B cell (primary cell): ENCODE measurements at regions of chr15 and their contacts with region 1.

Region 1: GRCh38 chr15:50496692-50497091 is 49.8 kb downstream of the USP50 start:
- DNase-seq: no peak
- ATAC-seq: no peak
- H3K4me3 ChIP-seq: no peak overlapping the region
- H3K4me3 Mint-ChIP-seq: no peak overlapping the region
- H3K27ac ChIP-seq: no peak overlapping the region
- H3K27ac Mint-ChIP-seq: no peak overlapping the region
- H3K4me1 ChIP-seq: peaks cover 4 to 7% of the 10 kb centered on the region in 2 donors
- H3K4me1 Mint-ChIP-seq: peaks cover 8% of the 10 kb centered on the region
- H3K27me3 ChIP-seq: no peaks in the 10 kb centered on the region
- H3K27me3 Mint-ChIP-seq: no peaks in the 10 kb centered on the region
- CTCF ChIP-seq: no peak

Region 2: DNA sequence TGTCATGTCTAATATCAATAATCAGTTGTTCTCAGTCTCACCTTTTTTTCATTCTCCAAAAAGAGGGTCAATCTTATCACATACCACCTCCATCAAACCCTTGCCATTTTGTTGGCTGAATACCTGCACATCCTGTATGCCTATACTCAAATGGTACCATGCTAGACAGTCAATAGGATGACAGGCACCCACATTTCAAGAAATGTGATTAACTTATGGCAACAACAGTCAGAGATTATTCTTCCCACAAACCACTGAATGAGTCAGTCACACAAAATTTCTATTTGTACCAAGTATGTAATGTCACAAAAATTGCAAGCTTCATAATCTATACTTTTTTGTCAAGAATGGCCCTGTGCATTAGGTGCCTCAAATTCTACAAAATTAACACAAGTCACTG is 319.8 kb before region 1 on chr15:
- CTCF ChIA-PET with region 1: no interaction called
- POLR2A ChIA-PET with region 1: no interaction called
- intact Hi-C with region 1: no loop called
- DNase-seq: no peak
- ATAC-seq: no peak
- H3K4me3 ChIP-seq: no peak overlapping the region
- H3K4me3 Mint-ChIP-seq: no peak overlapping the region
- H3K27ac ChIP-seq: no peak overlapping the region
- H3K27ac Mint-ChIP-seq: no peak overlapping the region
- H3K4me1 ChIP-seq: peaks cover 0 to 2% of the 10 kb centered on the region in 2 donors
- H3K4me1 Mint-ChIP-seq: no peaks in the 10 kb centered on the region
- H3K27me3 ChIP-seq: peaks cover 0 to 9% (median 3%) of the 10 kb centered on the region in 4 experiments
- H3K27me3 Mint-ChIP-seq: peaks cover 29% of the 10 kb centered on the region
- CTCF ChIP-seq: no peak

Region 3: GRCh38 chr15:50590288-50590687 is 93.6 kb after region 1 on chr15:
- CTCF ChIA-PET with region 1: no interaction called
- POLR2A ChIA-PET with region 1: no interaction called
- intact Hi-C with region 1: loop called (anchors 10 kb)
- DNase-seq: no peak
- ATAC-seq: no peak
- H3K4me3 ChIP-seq: no peak overlapping the region
- H3K4me3 Mint-ChIP-seq: no peak overlapping the region
- H3K27ac ChIP-seq: no peak overlapping the region
- H3K27ac Mint-ChIP-seq: no peak overlapping the region
- H3K4me1 ChIP-seq: no peaks in the 10 kb centered on the region
- H3K4me1 Mint-ChIP-seq: no peaks in the 10 kb centered on the region
- H3K27me3 ChIP-seq: no peaks in the 10 kb centered on the region
- H3K27me3 Mint-ChIP-seq: no peaks in the 10 kb centered on the region
- CTCF ChIP-seq: no peak

Region 4: DNA sequence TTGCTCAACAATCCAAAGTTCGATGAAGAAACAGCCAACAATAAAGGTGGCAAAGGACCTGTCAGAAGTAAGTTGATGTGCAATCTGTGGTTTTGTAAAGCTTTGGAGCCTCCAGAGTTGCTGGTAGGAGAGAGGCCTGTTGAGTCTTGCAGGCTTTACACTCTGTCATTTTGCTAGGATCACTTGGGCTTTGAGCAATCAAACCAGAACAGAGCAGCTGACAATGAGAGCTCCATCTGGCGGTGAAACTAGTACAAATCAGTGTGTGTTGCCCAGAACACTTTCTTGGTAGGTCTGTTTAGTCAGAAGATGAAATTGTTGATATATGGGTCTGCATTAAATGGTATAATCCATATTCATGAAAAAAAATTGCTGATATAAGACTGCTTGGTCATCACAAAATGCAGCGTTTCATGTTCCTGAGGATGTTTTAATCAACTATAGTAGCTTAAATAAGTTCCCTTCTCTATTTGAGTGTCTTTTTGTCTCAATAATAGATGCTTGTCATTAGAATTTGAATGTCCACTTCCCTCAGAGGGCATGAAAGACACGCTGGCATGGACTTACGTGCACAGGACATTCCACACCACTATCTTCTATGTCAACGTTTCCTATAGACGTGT is 1280.4 kb after region 1 on chr15:
- CTCF ChIA-PET with region 1: no interaction called
- POLR2A ChIA-PET with region 1: no interaction called
- intact Hi-C with region 1: no loop called
- DNase-seq: peak; percentile 79
- ATAC-seq: peak; percentile 75
- H3K4me3 ChIP-seq: no peak overlapping the region
- H3K4me3 Mint-ChIP-seq: no peak overlapping the region
- H3K27ac ChIP-seq: no peak overlapping the region
- H3K27ac Mint-ChIP-seq: no peak overlapping the region
- H3K4me1 ChIP-seq: peaks cover 0 to 4% of the 10 kb centered on the region in 2 donors
- H3K4me1 Mint-ChIP-seq: peaks cover 13% of the 10 kb centered on the region
- H3K27me3 ChIP-seq: no peaks in the 10 kb centered on the region
- H3K27me3 Mint-ChIP-seq: no peaks in the 10 kb centered on the region
- CTCF ChIP-seq: peak; percentile 72